Activated T-helper 2 cell treated with anti-CD3 and anti-CD28 coated beads, Interferon-gamma antibody, Interleukin-2, Interleukin-4, amounts not matched to agents 10 μg/mL and 5 μg/mL and 100 μg/mL, durations not matched to agents 14 hours and 24 hours and 36 hours (primary cell): ENCODE measurements at regions of chr6 and their contacts with region 1.

Region 1: GRCh38 chr6:73520688-73521350 is at the start of gene EEF1A1:
- DNase-seq: peak; percentile 98
- H3K4me3 Mint-ChIP-seq: peak within 1 kb of the TSS; percentile 98
- H3K27ac Mint-ChIP-seq: peak within 1 kb of the TSS; percentile 100
- H3K4me1 Mint-ChIP-seq: peaks cover 32% of the 10 kb centered on the region
- H3K27me3 Mint-ChIP-seq: no peaks in the 10 kb centered on the region
- total RNA-seq, gene EEF1A1: 11,266 and 11,402 TPM in 2 replicates

Region 2: DNA sequence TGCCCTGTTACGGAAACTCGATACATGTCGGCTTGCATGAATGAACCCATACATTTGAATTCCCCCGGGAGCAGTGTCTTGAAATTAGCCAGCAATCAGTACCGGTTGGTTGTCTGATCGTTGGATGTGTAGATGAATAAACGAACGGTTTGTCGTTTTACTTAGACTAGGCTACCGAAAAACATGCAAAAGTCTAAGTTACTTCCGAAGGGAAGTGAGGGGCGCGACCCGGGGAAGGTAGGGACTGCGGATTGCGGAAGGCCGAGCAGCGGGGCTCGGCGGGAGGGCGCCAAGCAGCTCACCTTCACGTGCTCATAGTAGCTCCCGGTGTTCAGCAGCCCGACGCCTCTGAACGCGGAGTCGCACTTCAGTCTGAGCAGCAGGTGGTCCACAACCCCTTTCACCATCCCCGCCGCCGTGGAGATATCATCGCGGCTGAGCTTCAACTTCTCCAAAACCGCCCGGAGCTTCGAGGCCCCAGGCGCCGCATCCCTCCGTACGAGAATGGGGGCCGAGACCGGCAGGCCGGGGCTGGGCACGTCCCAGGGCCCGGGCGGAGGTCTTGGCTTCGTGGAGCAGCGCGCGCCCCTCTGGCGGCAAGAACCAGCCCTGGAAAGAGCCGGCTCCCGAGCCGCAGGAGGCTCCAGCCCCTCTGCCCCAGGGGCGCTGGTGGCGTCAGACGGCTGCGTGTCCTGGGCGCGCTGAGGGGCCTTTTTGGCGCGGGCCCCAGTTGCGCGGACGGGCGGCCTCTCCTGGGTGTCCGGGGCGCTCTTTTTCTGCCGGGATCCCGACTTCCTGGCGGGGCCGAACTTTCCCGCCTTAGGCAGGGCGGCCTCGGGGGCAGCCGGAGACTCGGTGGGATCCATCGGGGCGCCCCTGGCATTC is 69.4 kb before region 1 on chr6:
- intact Hi-C with region 1: loop called (anchors 2 kb)
- DNase-seq: peak; percentile 37
- H3K4me3 Mint-ChIP-seq: peak overlapping the region; percentile 87
- H3K27ac Mint-ChIP-seq: peak overlapping the region; percentile 82
- H3K4me1 Mint-ChIP-seq: peaks cover 25% of the 10 kb centered on the region
- H3K27me3 Mint-ChIP-seq: no peaks in the 10 kb centered on the region

Region 3: GRCh38 chr6:73580247-73581149 is 59.7 kb after region 1 on chr6:
- intact Hi-C with region 1: loop called (anchors 1 kb)
- DNase-seq: peak; percentile 47
- H3K4me3 Mint-ChIP-seq: peak overlapping the region; percentile 51
- H3K27ac Mint-ChIP-seq: peak overlapping the region; percentile 97
- H3K4me1 Mint-ChIP-seq: peaks cover 18% of the 10 kb centered on the region
- H3K27me3 Mint-ChIP-seq: no peaks in the 10 kb centered on the region

Region 4: GRCh38 chr6:73653571-73654424 is 133.0 kb after region 1 on chr6 and contains the start of gene SLC17A5:
- intact Hi-C with region 1: loop called (anchors 1 kb)
- DNase-seq: peak; percentile 82
- H3K4me3 Mint-ChIP-seq: peak within 1 kb of the TSS; percentile 96
- H3K27ac Mint-ChIP-seq: peak within 1 kb of the TSS; percentile 98
- H3K4me1 Mint-ChIP-seq: peaks cover 35% of the 10 kb centered on the region
- H3K27me3 Mint-ChIP-seq: no peaks in the 10 kb centered on the region
- total RNA-seq, gene SLC17A5: 5.8 and 6.7 TPM in 2 replicates

Region 5: GRCh38 chr6:73722318-73723060 is 201.7 kb after region 1 on chr6:
- intact Hi-C with region 1: loop called (anchors 5 kb)
- DNase-seq: no peak
- H3K4me3 Mint-ChIP-seq: peak overlapping the region; percentile 24
- H3K27ac Mint-ChIP-seq: peak overlapping the region; percentile 73
- H3K4me1 Mint-ChIP-seq: peaks cover 48% of the 10 kb centered on the region
- H3K27me3 Mint-ChIP-seq: no peaks in the 10 kb centered on the region

Region 6: GRCh38 chr6:75284632-75285286 is 1763.9 kb after region 1 on chr6 and contains the start of gene TMEM30A:
- intact Hi-C with region 1: loop called (anchors 10 kb)
- DNase-seq: peak; percentile 97
- H3K4me3 Mint-ChIP-seq: no peak within 1 kb of the TSS
- H3K27ac Mint-ChIP-seq: no peak within 1 kb of the TSS
- H3K4me1 Mint-ChIP-seq: peaks cover 40% of the 10 kb centered on the region
- H3K27me3 Mint-ChIP-seq: no peaks in the 10 kb centered on the region
- total RNA-seq, gene TMEM30A: 52.7 and 61.6 TPM in 2 replicates